Right lobe of liver (tissue), 6 donors: ENCODE measurements at regions of chr19 and their contacts with region 1.

Region 1: DNA sequence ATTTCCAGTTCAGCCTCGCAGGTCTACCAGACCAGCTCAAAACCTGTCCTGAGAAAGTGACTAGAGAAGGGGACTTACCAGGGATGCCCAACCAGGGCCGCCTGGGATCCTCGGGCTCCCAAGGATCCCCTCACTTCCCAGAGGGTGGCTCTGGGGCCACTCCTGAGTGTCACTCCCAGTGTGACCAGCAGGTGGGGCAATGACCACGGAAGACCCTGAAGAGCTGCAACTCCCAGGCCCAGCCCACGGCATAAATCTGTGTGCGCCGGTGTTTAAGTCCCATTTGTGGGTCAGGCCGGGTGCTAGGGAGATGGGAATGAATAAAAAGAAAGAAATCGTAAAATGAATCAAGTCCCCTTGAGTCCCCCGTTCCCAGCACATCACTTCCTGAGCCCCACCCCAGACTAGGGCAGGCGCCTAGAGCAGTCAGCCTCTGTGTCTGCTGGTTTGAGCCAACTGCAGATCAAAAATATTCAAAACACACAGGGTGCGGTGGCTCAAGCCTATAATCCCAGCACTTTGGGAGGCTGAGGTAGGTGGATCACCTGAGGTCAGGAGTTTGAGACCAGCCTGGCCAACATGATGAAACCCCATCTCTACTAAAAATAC is 10.7 kb downstream of the PTGIR start:
- DNase-seq: peak; percentile 80 to 82 (median 81)
- ATAC-seq: peak; percentile 86 to 88 (median 88)
- H3K4me3 ChIP-seq: no peak overlapping the region
- H3K27ac ChIP-seq: no peak overlapping the region
- H3K4me1 ChIP-seq: no peaks in the 10 kb centered on the region
- H3K27me3 ChIP-seq: no peaks in the 10 kb centered on the region
- CTCF ChIP-seq: peak; percentile 75 to 94 (median 86)
- POLR2A ChIP-seq: no peak

Region 2: GRCh38 chr19:46551164-46551563 is 63.1 kb before region 1 on chr19:
- intact Hi-C with region 1: no loop called
- DNase-seq: no peak
- ATAC-seq: peak in 3 of 4 donors; percentile 34 to 56 (median 38)
- H3K4me3 ChIP-seq: no peak overlapping the region
- H3K27ac ChIP-seq: no peak overlapping the region
- H3K4me1 ChIP-seq: no peaks in the 10 kb centered on the region
- H3K27me3 ChIP-seq: no peaks in the 10 kb centered on the region
- CTCF ChIP-seq: no peak
- POLR2A ChIP-seq: no peak

Region 3: DNA sequence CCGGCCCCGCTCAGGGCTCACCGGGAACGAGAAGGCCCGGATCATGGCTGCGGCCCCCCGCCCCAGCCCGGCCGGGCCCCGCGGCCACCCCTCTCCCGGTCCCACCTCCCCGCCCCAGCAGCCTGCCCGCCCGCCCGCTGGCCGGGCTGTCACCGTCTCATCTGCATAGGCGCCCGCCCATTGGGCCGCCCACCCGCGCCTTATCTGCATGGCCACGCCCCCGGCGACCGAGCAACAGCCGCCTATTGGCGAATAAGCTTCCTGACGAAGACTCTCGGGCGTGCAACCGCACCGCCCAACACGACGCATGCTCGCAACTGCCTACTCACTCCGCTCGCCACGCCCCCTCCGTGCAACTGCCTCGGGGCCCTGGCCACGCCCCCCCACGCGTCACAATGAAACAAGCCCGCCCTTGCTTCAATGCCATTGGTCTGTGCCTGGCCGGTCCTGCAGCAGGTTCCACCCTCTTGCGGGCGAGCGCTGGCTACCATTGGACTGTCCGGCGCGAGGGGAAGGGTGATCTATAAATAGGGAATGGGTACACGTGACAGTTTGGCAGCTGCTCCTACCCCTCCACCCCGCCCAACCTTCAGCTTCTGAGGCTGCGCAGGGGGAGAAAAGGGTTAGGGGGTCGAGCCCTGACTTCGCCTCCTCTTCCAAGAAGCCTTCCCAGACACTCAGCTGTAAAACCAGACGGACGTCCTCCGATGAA is 47.0 kb after region 1 on chr19 and contains the start of gene DACT3:
- intact Hi-C with region 1: loop called (anchors 5 kb)
- DNase-seq: peak; percentile 100
- ATAC-seq: peak; percentile 93 to 96 (median 96)
- H3K4me3 ChIP-seq: peak within 1 kb of the TSS; percentile 44 to 61 (median 51)
- H3K27ac ChIP-seq: peak within 1 kb of the TSS in 2 of 3 donors; percentile 39 to 57
- H3K4me1 ChIP-seq: peaks cover 0 to 10% (median 0%) of the 10 kb centered on the region in 4 donors
- H3K27me3 ChIP-seq: no peaks in the 10 kb centered on the region
- CTCF ChIP-seq: peak in 1 of 4 donors; percentile 18
- POLR2A ChIP-seq: no peak
- total RNA-seq, gene DACT3: 0.46 to 1.6 (median 0.93) TPM

Region 4: DNA sequence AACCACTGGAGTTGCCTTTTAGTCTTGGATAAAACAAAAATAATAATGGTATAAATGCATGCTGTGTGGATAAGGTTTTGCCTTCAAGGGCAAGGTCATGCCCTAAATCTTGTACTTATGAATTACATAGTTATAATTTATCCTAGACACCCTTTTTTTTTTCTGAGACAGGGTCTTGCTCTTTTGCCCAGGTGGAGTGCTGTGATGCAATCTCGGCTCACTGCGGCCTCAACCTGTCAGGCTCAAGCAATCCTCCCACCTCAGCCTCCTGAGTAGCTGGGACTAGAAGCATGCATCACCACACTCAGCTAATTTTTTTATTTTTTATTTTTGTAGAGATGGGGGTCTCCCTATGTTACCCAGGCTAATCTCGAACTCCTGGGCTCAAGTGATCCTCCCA is 54.4 kb after region 1 on chr19:
- intact Hi-C with region 1: loop called (anchors 5 kb)
- DNase-seq: no peak
- ATAC-seq: no peak
- H3K4me3 ChIP-seq: no peak overlapping the region
- H3K27ac ChIP-seq: no peak overlapping the region
- H3K4me1 ChIP-seq: no peaks in the 10 kb centered on the region
- H3K27me3 ChIP-seq: no peaks in the 10 kb centered on the region
- CTCF ChIP-seq: no peak
- POLR2A ChIP-seq: no peak

Region 5: DNA sequence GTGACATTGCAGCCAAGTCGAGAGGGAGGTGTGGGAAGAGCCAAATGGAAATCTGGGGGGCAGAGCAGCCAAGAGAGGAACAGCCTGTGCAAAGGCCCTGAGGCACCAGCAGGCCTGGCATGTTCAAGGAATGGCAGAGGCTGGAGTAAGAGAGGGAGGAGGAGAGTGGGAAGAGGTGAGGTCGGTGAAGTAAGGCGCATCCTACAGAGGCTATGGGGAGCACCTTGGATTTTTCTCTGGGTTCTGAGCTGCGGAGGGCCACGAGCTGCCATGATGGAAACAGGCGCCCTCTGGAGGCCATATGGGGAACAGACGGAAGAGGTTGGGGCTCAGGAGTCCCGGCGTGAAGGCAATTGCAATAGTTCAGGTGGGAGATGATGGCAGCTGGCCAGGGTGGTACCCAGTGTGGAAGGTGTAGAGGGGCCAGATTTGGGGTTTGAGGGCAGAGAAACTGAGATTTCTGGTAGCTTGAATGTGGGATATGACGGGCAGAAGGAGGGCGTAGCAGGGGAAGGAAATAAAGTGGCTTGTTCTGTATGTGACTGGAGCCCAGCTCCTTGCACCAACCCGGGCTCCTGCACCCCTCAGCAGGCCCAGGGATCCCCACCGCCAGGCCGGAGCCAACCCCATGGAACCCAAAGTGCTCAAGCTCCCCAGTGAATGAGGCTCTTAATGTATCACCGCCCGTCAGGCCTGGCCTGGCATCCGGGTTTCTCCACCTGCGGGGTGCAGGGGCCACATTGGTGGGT is 152.5 kb after region 1 on chr19:
- intact Hi-C with region 1: no loop called
- DNase-seq: no peak
- ATAC-seq: peak; percentile 23 to 56 (median 46)
- H3K4me3 ChIP-seq: no peak overlapping the region
- H3K27ac ChIP-seq: no peak overlapping the region
- H3K4me1 ChIP-seq: peaks cover 0 to 6% (median 0%) of the 10 kb centered on the region in 4 donors
- H3K27me3 ChIP-seq: no peaks in the 10 kb centered on the region
- CTCF ChIP-seq: peak; percentile 49 to 58 (median 57)
- POLR2A ChIP-seq: no peak